ENCODE measurements at regions of chr6 and their contacts with region 1.

Region 1: DNA sequence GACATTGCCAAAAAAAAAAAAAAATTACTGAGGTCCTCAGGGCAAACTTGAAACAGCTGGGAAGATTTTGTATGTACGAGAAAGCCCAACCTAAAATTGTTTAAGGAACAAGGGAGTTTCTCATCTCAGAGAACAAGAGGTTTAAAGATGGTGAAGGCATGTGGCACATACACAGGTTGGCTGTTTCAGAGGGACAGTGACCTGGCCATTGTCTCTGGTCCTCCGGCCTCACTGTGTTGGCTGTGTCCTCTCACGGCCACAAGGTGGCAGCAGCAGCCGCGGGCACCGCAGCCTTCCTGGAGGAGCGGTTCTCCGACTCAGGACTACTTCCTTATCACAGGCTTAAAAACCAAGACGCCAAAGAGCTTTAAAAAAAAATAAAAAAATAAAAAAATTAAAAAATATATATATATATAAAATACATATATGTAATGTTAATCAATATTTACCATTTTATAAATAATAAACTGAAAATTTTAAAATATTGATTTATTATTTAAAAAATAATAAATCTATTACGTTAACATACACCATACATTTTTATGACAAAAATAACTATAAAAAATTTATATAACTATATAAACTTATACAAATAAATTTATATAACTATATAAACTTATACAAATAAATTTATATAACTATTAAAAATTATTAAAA is 52.8 kb downstream of the GTF2H5 start:
- DNase-seq: peak; percentile 74
- H3K27ac ChIP-seq: peak overlapping the region; percentile 50
- CTCF ChIP-seq: peak; percentile 91

Region 2: DNA sequence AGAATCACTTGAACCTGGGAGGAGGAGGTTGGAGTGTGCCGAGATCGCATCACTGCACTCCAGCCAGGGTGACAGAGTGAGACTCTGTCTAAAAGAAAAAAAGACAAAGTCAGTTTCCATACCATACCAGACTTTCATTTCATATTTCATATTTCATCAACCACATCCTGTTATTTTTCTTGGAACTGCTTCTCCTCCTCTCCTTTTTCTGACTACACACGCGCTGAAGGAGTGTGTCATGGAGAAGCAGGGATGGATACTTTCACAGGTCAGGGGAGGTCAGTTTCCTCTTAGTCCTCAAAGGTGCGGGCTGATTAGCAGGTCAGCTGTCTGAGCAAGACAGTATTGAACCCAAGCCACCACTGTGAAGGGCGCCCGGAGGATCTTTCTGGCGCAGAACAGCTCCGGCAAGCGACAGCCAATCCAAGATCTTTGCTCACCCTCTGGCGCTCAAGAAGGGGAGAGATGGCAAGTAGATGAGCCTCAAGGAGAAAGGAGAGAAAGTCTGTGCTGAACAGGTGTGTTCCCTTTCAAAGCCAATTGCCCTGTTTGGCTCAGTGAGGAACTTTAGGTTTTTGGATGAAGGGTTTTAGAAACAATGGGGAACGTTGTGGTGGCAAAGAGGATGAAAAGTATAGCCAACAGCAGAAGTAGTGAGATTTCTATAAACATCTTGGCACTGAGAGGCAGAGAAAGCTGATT is 258.2 kb before region 1 on chr6:
- CTCF ChIA-PET with region 1: no interaction called
- POLR2A ChIA-PET with region 1: no interaction called
- DNase-seq: no peak
- H3K27ac ChIP-seq: peak overlapping the region; percentile 26; the same call in 1 of the 2 replicates
- CTCF ChIP-seq: no peak

Region 3: GRCh38 chr6:158115508-158115907 is 105.4 kb before region 1 on chr6:
- CTCF ChIA-PET with region 1: no interaction called
- POLR2A ChIA-PET with region 1: no interaction called
- DNase-seq: no peak
- H3K27ac ChIP-seq: no peak overlapping the region
- CTCF ChIP-seq: no peak

Region 4: DNA sequence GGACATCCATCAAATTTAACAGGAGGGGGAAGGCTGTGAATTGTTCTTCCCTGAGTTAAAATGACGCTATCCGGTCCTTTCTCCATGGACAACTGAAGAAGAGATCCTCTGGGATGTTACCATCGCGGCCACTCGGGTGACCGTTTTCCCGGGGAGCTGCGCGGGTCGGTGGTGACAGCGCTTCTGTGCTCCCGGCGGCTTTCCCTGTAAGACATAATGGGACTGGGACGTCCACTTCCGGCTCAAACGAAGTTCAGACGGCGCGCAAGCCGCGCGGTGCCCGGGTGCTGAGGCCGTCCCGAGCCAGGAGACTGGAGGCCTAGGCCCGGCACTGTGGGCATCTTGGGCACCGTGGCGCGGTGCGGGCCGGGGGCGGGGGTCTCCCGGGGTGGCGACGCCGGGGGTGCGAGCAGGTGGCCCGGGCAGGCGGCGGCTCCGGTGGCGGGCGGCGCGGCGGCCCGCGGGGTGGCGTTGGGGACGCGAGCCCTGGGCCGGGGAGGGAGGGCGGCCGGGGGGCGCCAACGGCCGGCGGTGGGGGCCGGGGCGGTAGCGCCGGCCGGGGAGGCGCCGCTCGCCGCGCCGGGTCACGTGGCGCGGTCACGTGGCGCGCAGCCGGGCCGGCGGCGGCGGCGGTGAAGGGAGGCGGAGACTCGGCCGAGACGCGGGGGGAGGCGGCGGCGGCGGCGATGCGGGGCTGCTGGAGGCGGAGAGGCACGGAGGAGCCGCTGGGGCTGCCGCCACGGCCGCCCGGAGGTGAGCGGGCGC is 10.8 kb after region 1 on chr6:
- CTCF ChIA-PET with region 1: interaction called, 12 read pairs
- POLR2A ChIA-PET with region 1: no interaction called
- DNase-seq: peak; percentile 74
- H3K27ac ChIP-seq: peak overlapping the region; percentile 92
- CTCF ChIP-seq: no peak

Region 5: DNA sequence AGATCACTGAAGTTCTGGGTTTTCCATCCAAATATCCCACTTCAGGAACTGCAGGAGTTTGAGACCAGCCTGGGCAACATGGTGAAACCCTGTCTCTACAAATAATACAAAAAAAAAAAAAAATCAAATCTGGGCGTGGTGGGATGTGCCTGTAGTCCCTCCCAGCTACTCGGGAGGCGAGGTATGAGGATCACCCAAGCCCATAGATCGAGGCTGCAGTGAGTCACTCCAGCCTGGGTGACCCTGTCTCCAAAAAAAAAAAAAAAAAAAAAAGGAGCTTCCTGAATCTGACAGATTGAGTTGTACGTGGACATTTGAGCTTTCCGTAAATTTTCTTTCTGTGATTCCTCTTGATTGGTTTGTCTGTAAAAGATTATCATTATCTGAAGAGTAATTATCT is 146.9 kb after region 1 on chr6:
- CTCF ChIA-PET with region 1: no interaction called
- POLR2A ChIA-PET with region 1: no interaction called
- DNase-seq: no peak
- H3K27ac ChIP-seq: no peak overlapping the region
- CTCF ChIP-seq: no peak

Region 6: GRCh38 chr6:158518191-158519127 is 297.5 kb after region 1 on chr6:
- CTCF ChIA-PET with region 1: interaction called, 34 read pairs
- POLR2A ChIA-PET with region 1: interaction called, 3 read pairs
- DNase-seq: peak; percentile 86
- H3K27ac ChIP-seq: peak overlapping the region; percentile 83
- CTCF ChIP-seq: peak; percentile 77

Measured in RWPE1 (cell line).